ENCODE measurements at regions of chr3 and their contacts with region 1.

Region 1: DNA sequence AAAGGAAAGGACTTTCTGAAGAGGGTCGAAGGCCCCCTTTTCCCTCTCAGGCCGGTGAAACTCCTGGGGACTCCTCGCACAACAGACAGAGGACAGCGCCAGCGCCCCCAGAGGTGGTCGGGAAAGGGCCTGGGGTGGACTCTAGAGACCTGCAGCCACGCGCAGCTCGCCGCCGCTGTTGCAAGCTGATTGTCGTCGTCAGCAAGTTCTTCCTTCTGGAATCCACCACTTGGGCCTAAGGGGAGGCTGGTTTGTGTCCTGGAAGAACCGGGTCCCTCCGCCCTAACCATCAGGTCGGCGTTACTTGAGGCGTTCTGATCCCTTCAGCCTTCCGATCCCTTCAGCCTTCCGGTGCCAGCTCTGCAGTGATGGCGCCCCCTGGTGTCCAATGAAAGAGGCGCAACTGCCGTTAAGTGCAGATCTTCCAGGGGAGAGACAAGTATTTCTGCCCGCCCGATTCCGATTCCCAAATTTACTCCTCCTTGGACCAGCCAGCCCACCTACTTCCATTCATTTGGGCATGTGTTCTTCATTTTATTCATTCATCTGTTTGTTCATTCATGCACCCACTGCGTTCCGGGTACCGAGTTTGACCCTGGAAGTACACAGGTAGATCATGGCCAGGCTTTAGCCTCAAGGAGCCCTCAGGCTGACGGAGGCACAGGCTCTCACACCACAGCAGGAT is 77.2 kb upstream of the SLC6A11 start:
- DNase-seq: peak; percentile 65 to 81
- ATAC-seq: peak; percentile 62 to 89 (median 64)
- H3K4me3 ChIP-seq: no peak overlapping the region
- H3K4me3 Mint-ChIP-seq: peak overlapping the region; percentile 63
- H3K27ac ChIP-seq: no peak overlapping the region
- H3K27ac Mint-ChIP-seq: no peak overlapping the region
- H3K4me1 ChIP-seq: peaks cover 8% of the 10 kb centered on the region
- H3K4me1 Mint-ChIP-seq: peaks cover 14 to 15% of the 10 kb centered on the region in 2 donors
- H3K27me3 ChIP-seq: peaks cover 8% of the 10 kb centered on the region
- H3K27me3 Mint-ChIP-seq: peaks cover 47 to 52% of the 10 kb centered on the region in 2 donors
- CTCF ChIP-seq: peak; percentile 80

Region 2: DNA sequence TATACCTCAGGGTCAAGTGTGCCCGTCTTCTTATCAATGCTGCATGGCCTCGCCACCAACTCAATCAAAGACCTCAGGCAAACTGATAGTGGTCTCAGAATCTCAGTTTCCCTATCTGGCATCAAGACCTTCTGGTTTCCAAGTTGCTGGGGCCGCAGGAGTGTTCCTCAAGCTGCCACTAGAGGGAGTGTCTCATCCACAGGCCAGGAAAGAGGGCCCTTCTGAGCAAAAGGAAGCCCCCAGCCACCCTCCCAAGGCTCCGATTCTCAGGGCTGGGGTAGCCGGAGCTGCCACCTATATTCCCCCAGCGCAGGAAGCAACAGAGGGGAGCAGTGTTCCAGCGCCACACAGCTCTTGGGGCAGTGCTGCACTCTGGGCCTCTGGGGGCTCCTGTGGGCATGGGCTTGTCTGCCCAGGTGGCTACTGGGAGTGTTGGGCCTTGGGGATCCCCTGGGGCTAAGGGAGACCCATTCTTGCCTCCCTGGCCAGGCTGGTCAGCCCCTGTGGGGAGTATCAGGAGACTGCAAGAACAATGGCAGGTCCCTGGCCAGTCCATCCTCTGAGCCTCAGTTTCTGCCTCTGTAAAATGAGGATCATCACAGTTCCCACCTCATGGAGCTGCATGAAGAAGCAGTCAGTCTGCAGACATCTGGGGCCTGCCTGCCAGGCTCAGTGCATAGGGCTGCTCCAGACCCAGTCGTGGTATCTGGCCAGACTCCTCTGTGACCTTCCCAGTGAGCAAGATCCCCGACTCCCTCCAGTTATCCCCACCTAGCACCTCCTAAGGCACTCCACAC is 394.5 kb before region 1 on chr3:
- intact Hi-C with region 1: loop called (anchors 1 kb)
- DNase-seq: peak; percentile 47 to 77
- ATAC-seq: peak in 2 of 3 donors; percentile 47 to 65
- H3K4me3 ChIP-seq: no peak overlapping the region
- H3K4me3 Mint-ChIP-seq: no peak overlapping the region
- H3K27ac ChIP-seq: no peak overlapping the region
- H3K27ac Mint-ChIP-seq: no peak overlapping the region
- H3K4me1 ChIP-seq: peaks cover 3% of the 10 kb centered on the region
- H3K4me1 Mint-ChIP-seq: no peaks in the 10 kb centered on the region
- H3K27me3 ChIP-seq: no peaks in the 10 kb centered on the region
- H3K27me3 Mint-ChIP-seq: no peaks in the 10 kb centered on the region
- CTCF ChIP-seq: peak; percentile 92

Region 3: DNA sequence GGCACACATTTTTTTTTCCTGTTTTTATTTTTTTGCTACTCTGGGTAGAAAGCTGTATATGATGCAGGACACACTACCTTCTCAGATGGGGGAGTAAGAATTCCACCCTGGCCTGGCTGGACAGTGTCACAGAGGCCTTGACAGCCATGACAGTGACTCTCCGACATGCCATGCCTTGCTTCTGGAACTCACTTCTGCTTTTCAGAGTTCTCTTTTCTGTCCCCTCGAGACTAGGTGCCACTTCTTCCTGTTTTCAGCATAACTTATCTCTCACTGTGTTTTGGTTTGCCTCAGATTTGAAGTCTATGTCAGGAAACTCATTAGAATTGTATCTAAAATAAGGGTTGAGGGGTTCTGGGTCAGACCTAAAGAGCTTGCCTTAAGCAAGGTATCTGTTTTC is 348.8 kb before region 1 on chr3:
- intact Hi-C with region 1: no loop called
- DNase-seq: no peak
- ATAC-seq: no peak
- H3K4me3 ChIP-seq: no peak overlapping the region
- H3K4me3 Mint-ChIP-seq: no peak overlapping the region
- H3K27ac ChIP-seq: peak overlapping the region; percentile 57
- H3K27ac Mint-ChIP-seq: no peak overlapping the region
- H3K4me1 ChIP-seq: peaks cover 30% of the 10 kb centered on the region
- H3K4me1 Mint-ChIP-seq: peaks cover 0 to 5% of the 10 kb centered on the region in 2 donors
- H3K27me3 ChIP-seq: no peaks in the 10 kb centered on the region
- H3K27me3 Mint-ChIP-seq: no peaks in the 10 kb centered on the region
- CTCF ChIP-seq: no peak

Region 4: DNA sequence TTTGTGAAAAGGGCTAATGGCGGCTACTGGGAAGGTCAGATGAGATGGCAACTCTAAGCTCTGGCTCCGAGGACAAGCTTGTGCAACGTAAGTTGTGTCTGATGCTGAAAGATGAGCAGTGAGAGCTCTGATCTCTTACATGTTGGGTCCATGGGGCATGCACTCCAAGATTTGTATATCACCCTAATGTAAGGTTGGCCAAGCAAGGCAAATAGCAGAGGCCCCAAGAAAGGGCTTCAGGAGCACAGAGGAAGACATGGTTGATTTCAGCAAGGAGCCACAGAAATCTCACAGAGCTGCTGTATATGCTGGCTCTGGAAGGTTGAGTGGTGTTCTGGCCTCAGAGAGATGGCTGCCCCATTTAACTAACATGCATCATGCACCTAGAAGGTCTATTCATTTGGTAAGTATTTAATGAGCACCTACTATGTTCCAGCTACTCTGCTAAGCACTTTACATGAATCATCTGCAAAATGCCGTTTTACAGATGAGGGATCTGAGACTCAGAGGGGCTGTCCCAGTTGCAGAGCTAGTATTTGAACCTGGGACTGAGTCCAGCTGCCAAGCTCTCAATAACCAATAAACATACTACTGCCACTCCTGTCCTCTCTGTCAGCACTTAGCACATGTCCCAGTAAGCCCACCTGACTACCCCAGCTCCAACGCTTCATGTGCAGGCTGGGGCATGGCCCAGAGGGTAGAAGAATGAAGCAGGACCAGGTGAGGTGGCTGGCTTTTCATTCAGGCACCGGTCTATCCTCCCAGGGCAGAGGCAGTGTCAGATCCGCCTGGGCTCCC is 205.7 kb before region 1 on chr3:
- intact Hi-C with region 1: no loop called
- DNase-seq: peak in 1 of 2 donors; percentile 2
- ATAC-seq: peak in 1 of 3 donors; percentile 7
- H3K4me3 ChIP-seq: no peak overlapping the region
- H3K4me3 Mint-ChIP-seq: no peak overlapping the region
- H3K27ac ChIP-seq: no peak overlapping the region
- H3K27ac Mint-ChIP-seq: no peak overlapping the region
- H3K4me1 ChIP-seq: no peaks in the 10 kb centered on the region
- H3K4me1 Mint-ChIP-seq: no peaks in the 10 kb centered on the region
- H3K27me3 ChIP-seq: no peaks in the 10 kb centered on the region
- H3K27me3 Mint-ChIP-seq: peaks cover 7 to 35% of the 10 kb centered on the region in 2 donors
- CTCF ChIP-seq: no peak